ENCODE measurements at regions of chr7 and their contacts with region 1.

Region 1: DNA sequence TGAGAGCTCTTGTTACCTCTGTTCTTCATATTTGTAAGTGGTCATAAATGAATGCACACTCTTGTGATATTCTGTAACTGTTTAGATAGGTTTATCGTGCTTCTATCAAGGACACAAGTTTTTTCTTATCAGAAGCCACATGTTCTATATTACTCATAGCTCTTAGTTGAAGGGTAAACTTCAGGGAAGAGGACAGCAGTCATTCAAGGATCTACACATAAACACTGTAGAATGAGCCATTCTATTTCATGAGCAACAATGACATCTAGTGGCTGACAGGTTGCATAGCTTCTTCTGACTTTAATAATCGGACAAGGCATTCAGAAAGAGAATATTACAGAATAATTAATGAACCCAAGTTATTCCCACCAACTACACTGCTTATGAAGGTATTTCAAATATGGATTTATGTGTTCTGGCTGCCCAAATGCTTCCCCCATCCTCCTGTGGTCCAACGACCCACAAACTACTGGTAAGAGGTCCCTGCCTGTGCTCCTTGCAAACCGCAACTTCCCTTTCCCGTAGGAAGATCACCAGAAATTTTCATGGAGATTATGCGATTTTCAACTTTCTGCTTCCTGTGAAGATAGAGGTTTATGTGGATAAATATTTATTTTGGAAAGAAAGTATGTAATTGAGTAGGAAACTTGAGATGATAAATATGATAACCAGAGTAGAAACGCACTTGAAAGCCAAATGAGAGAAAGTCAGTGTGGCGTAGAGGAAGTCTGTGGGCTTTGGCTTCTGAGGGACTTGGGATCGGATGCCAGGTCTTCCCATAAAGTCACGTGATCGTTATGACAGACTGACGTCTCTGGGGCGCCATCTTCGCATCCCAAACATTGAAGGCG is 16.8 kb upstream of the ABCB5 start:
- DNase-seq: no peak
- H3K4me3 Mint-ChIP-seq: no peak overlapping the region
- H3K27ac Mint-ChIP-seq: no peak overlapping the region
- H3K4me1 Mint-ChIP-seq: peaks cover 3% of the 10 kb centered on the region
- H3K27me3 Mint-ChIP-seq: peaks cover 22% of the 10 kb centered on the region

Region 2: GRCh38 chr7:19713676-19714075 is 885.0 kb before region 1 on chr7:
- CTCF ChIA-PET with region 1: interaction called, 82 read pairs
- intact Hi-C with region 1: loop called (anchors 1 kb)
- DNase-seq: peak; percentile 66
- H3K4me3 Mint-ChIP-seq: no peak overlapping the region
- H3K27ac Mint-ChIP-seq: no peak overlapping the region
- H3K4me1 Mint-ChIP-seq: peaks cover 15% of the 10 kb centered on the region
- H3K27me3 Mint-ChIP-seq: peaks cover under 1% of the 10 kb centered on the region

Region 3: GRCh38 chr7:19754521-19755116 is 844.1 kb before region 1 on chr7:
- CTCF ChIA-PET with region 1: interaction called, 18 read pairs
- intact Hi-C with region 1: loop called (anchors 1 kb)
- DNase-seq: no peak
- H3K4me3 Mint-ChIP-seq: no peak overlapping the region
- H3K27ac Mint-ChIP-seq: no peak overlapping the region
- H3K4me1 Mint-ChIP-seq: no peaks in the 10 kb centered on the region
- H3K27me3 Mint-ChIP-seq: peaks cover 8% of the 10 kb centered on the region

Region 4: GRCh38 chr7:20172736-20173334 is 425.8 kb before region 1 on chr7:
- CTCF ChIA-PET with region 1: interaction called, 3 read pairs
- intact Hi-C with region 1: loop called (anchors 2 kb)
- DNase-seq: peak; percentile 39
- H3K4me3 Mint-ChIP-seq: no peak overlapping the region
- H3K27ac Mint-ChIP-seq: no peak overlapping the region
- H3K4me1 Mint-ChIP-seq: no peaks in the 10 kb centered on the region
- H3K27me3 Mint-ChIP-seq: no peaks in the 10 kb centered on the region

Region 5: GRCh38 chr7:20539201-20539600 is 59.5 kb before region 1 on chr7:
- CTCF ChIA-PET with region 1: no interaction called
- intact Hi-C with region 1: loop called (anchors 1 kb)
- DNase-seq: no peak
- H3K4me3 Mint-ChIP-seq: no peak overlapping the region
- H3K27ac Mint-ChIP-seq: no peak overlapping the region
- H3K4me1 Mint-ChIP-seq: no peaks in the 10 kb centered on the region
- H3K27me3 Mint-ChIP-seq: no peaks in the 10 kb centered on the region

Region 6: GRCh38 chr7:20560325-20561180 is 38.1 kb before region 1 on chr7:
- CTCF ChIA-PET with region 1: no interaction called
- intact Hi-C with region 1: no loop called
- DNase-seq: no peak
- H3K4me3 Mint-ChIP-seq: no peak overlapping the region
- H3K27ac Mint-ChIP-seq: no peak overlapping the region
- H3K4me1 Mint-ChIP-seq: no peaks in the 10 kb centered on the region
- H3K27me3 Mint-ChIP-seq: no peaks in the 10 kb centered on the region

Measured in activated naive CD4-positive, alpha-beta T cell treated with anti-CD3 and anti-CD28 coated beads for 36 hours (primary cell).